ENCODE measurements at regions of chr7 and their contacts with region 1.

Region 1: GRCh38 chr7:114444196-114444595 is 29.6 kb downstream of the FOXP2 start:
- DNase-seq: no peak
- H3K4me3 ChIP-seq: no peak overlapping the region
- H3K27ac ChIP-seq: no peak overlapping the region
- H3K4me1 ChIP-seq: no peaks in the 10 kb centered on the region
- H3K27me3 ChIP-seq: no peaks in the 10 kb centered on the region
- CTCF ChIP-seq: no peak
- POLR2A ChIP-seq: no peak

Region 2: GRCh38 chr7:115083935-115084334 is 639.7 kb after region 1 on chr7:
- intact Hi-C with region 1: loop called (anchors 5 kb)
- DNase-seq: no peak
- H3K4me3 ChIP-seq: no peak overlapping the region
- H3K27ac ChIP-seq: no peak overlapping the region
- H3K4me1 ChIP-seq: peaks cover 0 to 19% (median 0%) of the 10 kb centered on the region in 3 donors
- H3K27me3 ChIP-seq: no peaks in the 10 kb centered on the region
- CTCF ChIP-seq: no peak
- POLR2A ChIP-seq: no peak